Activated naive CD4-positive, alpha-beta T cell treated with anti-CD3 and anti-CD28 coated beads for 36 hours (primary cell): ENCODE measurements at regions of chr6 and their contacts with region 1.

Region 1: GRCh38 chr6:146857180-146857979 is 258.6 kb downstream of the ADGB start:
- DNase-seq: peak; percentile 84
- H3K4me3 Mint-ChIP-seq: no peak overlapping the region
- H3K27ac Mint-ChIP-seq: no peak overlapping the region
- H3K4me1 Mint-ChIP-seq: peaks cover 21% of the 10 kb centered on the region
- H3K27me3 Mint-ChIP-seq: peaks cover 2% of the 10 kb centered on the region

Region 2: DNA sequence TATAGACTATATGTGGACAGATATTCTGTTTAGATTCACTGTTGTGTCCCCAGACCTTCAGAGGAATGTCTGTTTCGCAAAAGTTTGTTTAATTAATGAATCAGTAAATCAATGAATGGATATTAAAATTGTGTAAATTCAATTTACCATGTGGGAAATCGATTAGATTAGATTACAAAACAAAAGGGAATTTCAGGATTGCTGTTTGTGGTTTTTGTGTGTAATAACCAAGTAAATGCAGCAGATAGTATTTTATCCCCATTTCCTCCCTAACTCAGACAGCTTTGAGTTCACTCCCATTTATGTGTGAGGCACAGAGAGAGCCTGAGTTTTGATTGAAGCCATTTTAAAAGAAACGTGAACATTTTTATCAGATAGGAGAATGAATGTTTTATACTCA is 43.8 kb before region 1 on chr6:
- CTCF ChIA-PET with region 1: no interaction called
- intact Hi-C with region 1: no loop called
- DNase-seq: no peak
- H3K4me3 Mint-ChIP-seq: no peak overlapping the region
- H3K27ac Mint-ChIP-seq: no peak overlapping the region
- H3K4me1 Mint-ChIP-seq: no peaks in the 10 kb centered on the region
- H3K27me3 Mint-ChIP-seq: peaks cover 4% of the 10 kb centered on the region

Region 3: GRCh38 chr6:146840216-146840615 is 17.2 kb before region 1 on chr6:
- CTCF ChIA-PET with region 1: no interaction called
- intact Hi-C with region 1: no loop called
- DNase-seq: no peak
- H3K4me3 Mint-ChIP-seq: no peak overlapping the region
- H3K27ac Mint-ChIP-seq: no peak overlapping the region
- H3K4me1 Mint-ChIP-seq: no peaks in the 10 kb centered on the region
- H3K27me3 Mint-ChIP-seq: peaks cover 2% of the 10 kb centered on the region

Region 4: GRCh38 chr6:147166360-147166944 is 309.1 kb after region 1 on chr6:
- CTCF ChIA-PET with region 1: no interaction called
- intact Hi-C with region 1: loop called (anchors 1 kb)
- DNase-seq: no peak
- H3K4me3 Mint-ChIP-seq: no peak overlapping the region
- H3K27ac Mint-ChIP-seq: no peak overlapping the region
- H3K4me1 Mint-ChIP-seq: peaks cover 6% of the 10 kb centered on the region
- H3K27me3 Mint-ChIP-seq: no peaks in the 10 kb centered on the region

Region 5: DNA sequence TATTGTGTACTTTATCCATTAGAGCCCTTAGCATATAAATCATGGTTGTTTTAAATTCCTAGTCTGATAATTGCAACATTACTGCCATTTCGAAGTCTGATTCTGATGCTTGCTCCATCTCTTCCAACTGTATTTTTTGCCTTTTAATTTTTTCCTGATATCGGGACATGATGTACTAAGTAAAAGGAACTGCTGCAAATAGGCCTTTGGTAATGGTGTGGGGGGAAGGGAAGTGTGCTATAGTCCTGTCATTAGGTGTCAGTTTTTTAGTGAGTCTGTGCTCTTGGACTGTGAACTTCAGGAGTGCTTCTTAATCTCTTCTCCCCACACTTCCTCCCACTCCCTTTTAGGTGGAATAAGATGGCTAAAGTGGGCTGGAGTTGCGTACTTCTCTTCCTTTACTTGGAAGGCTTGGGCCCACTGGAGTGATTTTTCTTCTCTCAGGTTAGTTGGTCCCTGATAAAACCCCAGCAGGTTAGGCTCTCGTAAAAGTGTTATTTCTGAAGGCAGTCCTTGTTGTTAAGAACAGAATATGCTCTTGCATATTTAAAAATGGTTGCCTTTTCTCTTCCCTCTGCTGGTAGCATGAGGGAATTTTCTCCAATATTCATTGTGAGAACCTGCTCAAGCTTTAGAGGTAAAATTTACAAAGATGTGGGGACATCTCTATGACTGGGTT is 364.9 kb after region 1 on chr6:
- CTCF ChIA-PET with region 1: no interaction called
- intact Hi-C with region 1: no loop called
- DNase-seq: no peak
- H3K4me3 Mint-ChIP-seq: no peak overlapping the region
- H3K27ac Mint-ChIP-seq: no peak overlapping the region
- H3K4me1 Mint-ChIP-seq: peaks cover 43% of the 10 kb centered on the region
- H3K27me3 Mint-ChIP-seq: no peaks in the 10 kb centered on the region

Region 6: DNA sequence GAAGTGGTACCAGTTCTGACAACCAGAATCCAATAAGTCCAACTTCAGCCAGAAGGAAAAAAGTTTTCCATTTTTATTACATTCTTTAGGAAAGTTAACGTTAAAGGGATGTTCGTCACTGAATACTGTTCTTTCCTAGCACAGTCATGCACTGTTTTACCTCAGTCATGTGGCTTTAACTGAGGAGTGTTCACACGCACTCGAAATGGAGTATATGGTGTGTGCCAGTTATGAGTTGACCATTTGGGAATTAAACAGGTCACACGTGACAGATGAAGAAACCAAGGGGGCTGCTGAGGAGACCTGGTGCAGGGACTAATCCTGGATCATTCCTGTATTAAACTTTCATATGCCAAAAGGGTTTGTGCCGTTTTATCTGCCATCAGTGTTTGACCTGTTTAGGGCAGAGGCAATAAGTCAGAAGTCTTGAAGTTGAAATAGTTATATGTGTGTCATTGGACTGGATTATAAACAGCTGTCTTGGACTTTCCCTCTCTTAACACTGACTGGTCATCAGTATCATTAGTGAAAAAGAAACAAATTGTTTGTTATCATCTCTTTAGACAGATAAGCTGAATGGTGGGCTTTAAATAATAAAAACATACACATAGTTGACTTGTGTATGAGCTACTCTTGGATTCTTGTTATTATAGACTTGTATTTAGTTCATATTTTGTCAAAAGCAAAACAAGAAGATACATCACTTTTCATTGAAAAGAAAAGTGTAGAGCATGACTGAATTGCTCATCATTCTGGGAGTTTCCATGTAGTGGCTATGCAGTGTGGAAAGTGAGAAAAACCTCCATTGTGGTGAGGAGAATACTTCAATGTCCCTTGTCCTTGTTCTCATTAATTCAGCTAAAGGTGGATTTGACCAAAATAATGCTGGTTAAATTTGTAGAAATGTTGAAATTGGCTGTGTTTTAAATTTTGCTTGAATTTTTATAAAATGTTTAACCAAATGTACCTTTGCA is 527.6 kb after region 1 on chr6:
- CTCF ChIA-PET with region 1: no interaction called
- intact Hi-C with region 1: loop called (anchors 2 kb)
- DNase-seq: no peak
- H3K4me3 Mint-ChIP-seq: no peak overlapping the region
- H3K27ac Mint-ChIP-seq: no peak overlapping the region
- H3K4me1 Mint-ChIP-seq: peaks cover 13% of the 10 kb centered on the region
- H3K27me3 Mint-ChIP-seq: no peaks in the 10 kb centered on the region

Region 7: DNA sequence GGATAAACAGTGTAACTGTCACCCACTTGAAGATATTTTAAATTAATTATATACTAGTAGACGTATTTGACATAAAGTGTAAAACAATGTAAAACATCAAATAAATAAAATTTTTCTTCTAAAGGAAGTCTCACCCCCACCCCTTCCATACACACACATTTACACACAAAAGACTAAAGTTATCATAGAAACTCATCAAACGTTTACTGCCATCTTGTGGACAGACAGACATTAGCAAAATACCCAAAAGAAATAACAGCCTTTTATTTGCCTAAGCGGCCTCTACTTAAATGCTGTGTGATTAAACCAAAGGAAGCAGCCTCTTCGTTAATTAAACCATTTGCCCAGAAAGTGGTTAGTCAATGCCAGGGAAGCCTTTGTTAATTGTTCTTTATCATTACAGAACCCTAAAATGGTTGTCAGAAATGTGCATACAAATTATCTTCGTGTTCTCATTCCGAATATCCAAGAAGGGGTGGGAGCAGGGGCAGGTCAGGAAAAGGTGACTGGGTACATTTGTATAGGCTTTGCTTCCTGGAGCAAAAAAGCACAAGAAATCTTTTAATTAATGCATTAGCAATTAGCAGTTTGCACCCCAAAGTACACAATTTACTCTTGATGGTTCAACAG is 1309.1 kb after region 1 on chr6:
- CTCF ChIA-PET with region 1: interaction called, 3 read pairs
- intact Hi-C with region 1: loop called (anchors 1 kb)
- DNase-seq: no peak
- H3K4me3 Mint-ChIP-seq: no peak overlapping the region
- H3K27ac Mint-ChIP-seq: no peak overlapping the region
- H3K4me1 Mint-ChIP-seq: no peaks in the 10 kb centered on the region
- H3K27me3 Mint-ChIP-seq: no peaks in the 10 kb centered on the region

Region 8: DNA sequence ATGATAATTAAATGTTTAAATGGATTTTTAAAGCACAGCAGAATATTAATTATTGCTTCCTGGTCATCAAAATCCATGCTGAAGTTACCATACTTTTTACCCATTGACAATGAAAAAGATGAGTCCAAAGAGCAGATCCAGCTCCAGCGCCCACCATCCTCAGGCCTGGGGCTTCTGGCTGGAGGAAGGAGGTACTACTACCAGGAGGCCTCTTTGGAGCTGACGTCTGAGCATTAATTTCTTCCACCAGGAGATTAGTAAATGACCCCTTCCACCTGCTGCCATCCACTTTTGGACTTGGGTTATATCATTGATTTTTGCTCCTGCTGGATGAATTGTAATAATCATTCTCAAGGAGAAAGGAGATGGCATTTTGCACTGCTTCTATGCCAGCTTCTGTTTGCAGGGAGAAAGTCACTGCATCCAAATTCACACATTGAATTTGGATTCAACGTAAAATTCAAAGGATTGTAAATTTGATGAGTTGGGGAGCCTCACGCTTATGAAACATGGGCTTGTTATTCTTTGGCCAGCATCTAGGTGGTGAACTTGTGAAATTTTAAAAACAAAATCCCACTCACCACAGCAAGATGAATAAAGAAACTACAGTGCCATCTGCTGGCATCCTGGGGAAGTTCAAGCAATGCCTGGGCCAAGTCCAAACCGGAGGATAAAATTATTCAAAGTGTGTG is 1607.1 kb after region 1 on chr6:
- CTCF ChIA-PET with region 1: no interaction called
- intact Hi-C with region 1: loop called (anchors 1 kb)
- DNase-seq: peak; percentile 72
- H3K4me3 Mint-ChIP-seq: no peak overlapping the region
- H3K27ac Mint-ChIP-seq: no peak overlapping the region
- H3K4me1 Mint-ChIP-seq: no peaks in the 10 kb centered on the region
- H3K27me3 Mint-ChIP-seq: peaks cover 13% of the 10 kb centered on the region